ENCODE measurements at regions of chr16 and their contacts with region 1.

Region 1: DNA sequence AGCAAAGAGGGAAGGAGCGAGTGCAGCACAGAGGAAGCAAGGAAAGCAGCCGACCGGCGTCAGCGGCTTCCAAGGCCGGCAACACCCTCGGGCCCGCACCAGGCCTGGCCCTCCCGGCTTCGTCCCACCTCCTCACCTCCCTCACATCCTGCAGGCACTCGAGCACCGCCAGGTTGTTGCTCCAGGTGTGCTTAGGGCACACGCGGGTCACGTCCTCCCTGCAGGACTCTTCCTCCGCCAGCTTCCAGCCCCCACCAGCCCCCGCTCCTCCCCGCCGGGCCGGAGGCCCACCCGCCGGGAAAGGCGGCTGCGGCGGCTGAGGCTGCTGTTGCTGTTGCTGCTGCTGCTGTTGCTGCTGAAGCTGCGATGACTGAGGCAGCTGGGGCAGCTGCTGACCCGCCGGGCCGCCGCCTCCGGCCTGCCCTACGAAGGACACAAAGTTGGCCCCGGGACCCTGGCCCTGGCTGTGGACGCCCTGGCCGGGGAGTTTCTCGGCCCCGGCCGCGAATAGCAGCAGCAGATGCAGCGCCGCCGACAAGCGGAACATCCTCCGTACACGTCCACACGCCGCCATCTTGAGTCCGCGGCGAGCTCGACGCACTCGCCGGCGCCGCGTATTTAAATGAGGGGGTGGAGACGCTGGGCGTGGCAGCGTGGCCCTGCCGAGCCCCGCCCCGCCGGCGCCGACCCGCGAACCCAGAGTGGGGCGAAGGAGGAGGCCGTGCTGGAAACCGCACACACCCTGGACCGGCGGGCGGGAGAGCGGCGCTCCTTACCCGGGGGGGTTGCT is at the start of gene GLG1:
- DNase-seq: peak; percentile 93
- H3K4me3 Mint-ChIP-seq: peak within 1 kb of the TSS; percentile 83
- H3K27ac Mint-ChIP-seq: peak within 1 kb of the TSS; percentile 85
- H3K4me1 Mint-ChIP-seq: peaks cover 54% of the 10 kb centered on the region
- H3K27me3 Mint-ChIP-seq: no peaks in the 10 kb centered on the region
- total RNA-seq, gene GLG1: 58.1 to 63.8 TPM

Region 2: GRCh38 chr16:74466872-74467271 is 139.8 kb before region 1 on chr16:
- CTCF ChIA-PET with region 1: no interaction called
- POLR2A ChIA-PET with region 1: no interaction called
- intact Hi-C with region 1: loop called (anchors 5 kb)
- DNase-seq: no peak
- H3K4me3 Mint-ChIP-seq: no peak overlapping the region
- H3K27ac Mint-ChIP-seq: peak overlapping the region; percentile 50
- H3K4me1 Mint-ChIP-seq: peaks cover 32% of the 10 kb centered on the region
- H3K27me3 Mint-ChIP-seq: no peaks in the 10 kb centered on the region

Region 3: GRCh38 chr16:74556375-74556922 is 50.3 kb before region 1 on chr16:
- CTCF ChIA-PET with region 1: no interaction called
- POLR2A ChIA-PET with region 1: no interaction called
- intact Hi-C with region 1: loop called (anchors 10 kb)
- DNase-seq: no peak
- H3K4me3 Mint-ChIP-seq: no peak overlapping the region
- H3K27ac Mint-ChIP-seq: no peak overlapping the region
- H3K4me1 Mint-ChIP-seq: peaks cover 34% of the 10 kb centered on the region
- H3K27me3 Mint-ChIP-seq: no peaks in the 10 kb centered on the region

Region 4: GRCh38 chr16:74623214-74623842 is 16.6 kb after region 1 on chr16:
- CTCF ChIA-PET with region 1: interaction called, 8 read pairs
- POLR2A ChIA-PET with region 1: interaction called, 4 read pairs
- intact Hi-C with region 1: loop called (anchors 1 kb)
- DNase-seq: no peak
- H3K4me3 Mint-ChIP-seq: no peak overlapping the region
- H3K27ac Mint-ChIP-seq: no peak overlapping the region
- H3K4me1 Mint-ChIP-seq: peaks cover 38% of the 10 kb centered on the region
- H3K27me3 Mint-ChIP-seq: no peaks in the 10 kb centered on the region

Measured in activated CD4-positive, alpha-beta memory T cell treated with anti-CD3 and anti-CD28 coated beads for 36 hours (primary cell).